ENCODE measurements at regions of chr1 and their contacts with region 1.

Region 1: DNA sequence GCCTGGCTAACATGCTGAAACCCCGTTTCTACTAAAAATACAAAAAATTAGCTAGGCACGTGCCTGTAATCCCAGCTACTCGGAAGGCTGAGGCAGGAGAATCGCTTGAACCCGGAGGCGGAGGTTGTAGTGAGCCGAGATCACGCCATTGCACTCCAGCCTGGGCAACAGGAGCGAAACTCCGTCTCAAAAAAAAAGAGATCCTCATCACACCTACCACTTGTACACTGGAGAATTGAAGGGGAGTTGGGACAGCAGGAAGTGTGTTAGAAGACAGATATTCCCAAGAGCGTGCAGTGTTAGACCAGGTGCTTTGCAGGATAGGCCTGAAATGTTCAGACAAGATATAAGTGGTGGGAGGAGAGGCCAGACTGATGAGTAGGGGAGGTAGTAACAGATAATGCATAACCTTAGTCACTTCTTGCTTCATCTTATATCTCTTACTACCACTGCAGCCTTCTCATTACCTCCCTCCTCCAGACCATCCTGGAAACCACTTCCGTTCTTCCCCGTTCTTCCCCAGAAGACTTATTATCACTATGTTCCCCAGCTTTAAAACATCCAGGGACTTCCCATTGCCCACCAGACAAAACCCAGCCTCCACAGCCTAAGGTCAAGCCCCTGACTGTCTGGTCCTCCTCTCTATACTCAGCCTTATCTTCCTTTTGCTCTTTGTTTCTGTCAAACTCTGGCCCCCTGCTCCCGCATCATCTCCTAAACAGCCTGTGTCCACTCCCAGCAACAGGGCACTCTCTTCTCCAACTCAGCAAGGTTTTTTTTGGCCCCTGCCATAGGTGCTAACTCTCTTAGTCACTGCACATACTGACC is 21.3 kb downstream of the FAM20B start:
- DNase-seq: peak; percentile 86 to 98 (median 92)
- ATAC-seq: peak; percentile 89
- H3K4me3 ChIP-seq: no peak overlapping the region
- H3K27ac ChIP-seq: peak overlapping the region; percentile 87
- H3K4me1 ChIP-seq: peaks cover 33 to 45% of the 10 kb centered on the region in 2 experiments
- H3K27me3 ChIP-seq: no peaks in the 10 kb centered on the region
- CTCF ChIP-seq: no peak
- EP300 ChIP-seq: peak; percentile 100
- POLR2A ChIP-seq: peak; percentile 58; the same call in 1 of the 2 replicates
- RAD21 ChIP-seq: peak in 1 of 2 experiments; percentile 34; a peak in 2 of 4 replicates

Region 2: DNA sequence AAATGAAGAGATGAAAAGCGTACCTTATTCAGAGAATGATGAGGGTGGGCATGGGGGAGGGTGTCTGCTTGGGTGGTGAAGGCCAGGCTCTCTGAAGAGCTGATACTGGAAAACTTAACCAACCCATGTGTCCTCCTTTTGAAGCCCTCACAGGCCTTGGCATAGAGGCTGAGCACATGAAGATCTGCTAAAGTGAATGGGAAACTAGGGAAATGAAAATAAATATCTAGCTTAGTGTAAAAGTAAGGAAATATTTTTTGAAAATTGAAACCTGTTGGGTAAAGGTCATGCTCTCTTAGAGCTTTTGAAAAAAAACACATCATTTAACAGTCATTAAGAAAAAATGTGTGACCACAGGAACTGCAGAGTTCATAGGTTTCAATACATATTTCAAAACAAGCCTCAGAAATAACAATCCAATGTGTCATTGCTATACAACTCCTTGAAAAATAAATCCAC is 362.5 kb before region 1 on chr1:
- CTCF ChIA-PET with region 1: no interaction called
- POLR2A ChIA-PET with region 1: no interaction called
- in situ Hi-C with region 1: no loop called
- intact Hi-C with region 1: no loop called
- DNase-seq: no peak
- ATAC-seq: no peak
- H3K4me3 ChIP-seq: no peak overlapping the region
- H3K27ac ChIP-seq: no peak overlapping the region
- H3K4me1 ChIP-seq: no peaks in the 10 kb centered on the region
- H3K27me3 ChIP-seq: no peaks in the 10 kb centered on the region; a peak in 1 of 5 replicates
- CTCF ChIP-seq: no peak
- EP300 ChIP-seq: no peak
- POLR2A ChIP-seq: no peak
- RAD21 ChIP-seq: no peak

Region 3: GRCh38 chr1:178938959-178939317 is 108.1 kb before region 1 on chr1:
- CTCF ChIA-PET with region 1: no interaction called
- POLR2A ChIA-PET with region 1: no interaction called
- in situ Hi-C with region 1: no loop called
- intact Hi-C with region 1: no loop called
- DNase-seq: no peak
- ATAC-seq: no peak
- H3K4me3 ChIP-seq: no peak overlapping the region
- H3K27ac ChIP-seq: no peak overlapping the region
- H3K4me1 ChIP-seq: no peaks in the 10 kb centered on the region
- H3K27me3 ChIP-seq: peaks cover 50 to 55% of the 10 kb centered on the region in 2 experiments
- CTCF ChIP-seq: no peak
- EP300 ChIP-seq: no peak
- POLR2A ChIP-seq: no peak
- RAD21 ChIP-seq: no peak

Region 4: GRCh38 chr1:179016747-179017549 is 30.1 kb before region 1 on chr1:
- CTCF ChIA-PET with region 1: no interaction called
- POLR2A ChIA-PET with region 1: interaction called, 3 read pairs
- in situ Hi-C with region 1: no loop called
- intact Hi-C with region 1: loop called (anchors 1 kb)
- DNase-seq: peak; percentile 87 to 99 (median 91)
- ATAC-seq: peak; percentile 91
- H3K4me3 ChIP-seq: peak overlapping the region; percentile 21
- H3K27ac ChIP-seq: peak overlapping the region; percentile 67
- H3K4me1 ChIP-seq: peaks cover 39 to 43% of the 10 kb centered on the region in 2 experiments
- H3K27me3 ChIP-seq: no peaks in the 10 kb centered on the region
- CTCF ChIP-seq: no peak; a peak in 1 of 6 replicates
- EP300 ChIP-seq: peak; percentile 91
- POLR2A ChIP-seq: peak; percentile 71
- RAD21 ChIP-seq: peak in 1 of 2 experiments; percentile 10; a peak in 1 of 4 replicates

Region 5: DNA sequence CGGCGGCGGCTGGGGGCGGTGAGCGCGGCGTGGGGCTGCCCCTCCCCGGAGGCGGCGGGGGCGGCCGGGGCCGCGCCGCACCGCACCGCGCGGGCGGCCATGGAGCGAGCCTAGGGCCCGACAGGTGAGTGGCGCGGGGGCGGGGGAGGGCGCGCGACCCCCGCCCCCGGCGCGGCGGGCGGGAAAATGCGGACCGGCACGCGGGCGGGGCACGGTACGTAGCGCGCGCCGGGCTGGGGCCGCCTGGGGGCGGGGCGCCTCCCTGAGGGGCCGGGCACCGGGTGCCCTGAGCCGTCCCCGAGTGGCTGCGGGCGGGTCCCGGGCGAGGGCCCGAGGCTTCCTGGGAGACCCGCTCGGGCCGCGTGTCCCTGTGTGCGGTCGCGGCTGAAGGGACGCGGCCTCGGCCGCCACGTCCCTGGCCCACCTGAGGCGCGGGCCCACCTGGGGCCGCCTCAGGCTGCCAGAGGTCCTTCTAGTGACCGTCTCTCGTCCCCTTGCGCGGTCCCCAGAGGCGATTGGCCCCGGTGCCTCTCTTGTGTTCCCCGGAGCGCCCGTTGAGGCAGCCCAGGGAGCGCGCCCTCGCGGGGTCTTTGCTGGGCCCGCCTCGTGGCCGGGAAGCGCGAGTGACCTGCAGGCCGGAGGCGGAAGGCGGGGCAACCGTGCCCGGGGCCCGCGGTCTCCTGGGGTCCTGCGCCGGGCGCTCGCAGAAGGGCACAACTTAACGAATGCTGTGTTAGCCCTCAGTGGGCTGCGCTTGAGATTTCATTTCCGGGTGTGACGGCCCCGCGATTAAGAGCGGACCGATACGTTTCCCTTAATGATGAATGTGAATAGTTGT is 20.8 kb before region 1 on chr1:
- CTCF ChIA-PET with region 1: no interaction called
- POLR2A ChIA-PET with region 1: interaction called, 15 read pairs
- in situ Hi-C with region 1: no loop called
- intact Hi-C with region 1: loop called (anchors 1 kb)
- DNase-seq: peak; percentile 85 to 96 (median 94)
- ATAC-seq: peak; percentile 81
- H3K4me3 ChIP-seq: peak overlapping the region; percentile 72
- H3K27ac ChIP-seq: peak overlapping the region; percentile 95
- H3K4me1 ChIP-seq: peaks cover 28 to 61% of the 10 kb centered on the region in 2 experiments
- H3K27me3 ChIP-seq: no peaks in the 10 kb centered on the region
- CTCF ChIP-seq: no peak
- EP300 ChIP-seq: no peak
- POLR2A ChIP-seq: peak; percentile 75
- RAD21 ChIP-seq: no peak; a peak in 1 of 4 replicates

Region 6: DNA sequence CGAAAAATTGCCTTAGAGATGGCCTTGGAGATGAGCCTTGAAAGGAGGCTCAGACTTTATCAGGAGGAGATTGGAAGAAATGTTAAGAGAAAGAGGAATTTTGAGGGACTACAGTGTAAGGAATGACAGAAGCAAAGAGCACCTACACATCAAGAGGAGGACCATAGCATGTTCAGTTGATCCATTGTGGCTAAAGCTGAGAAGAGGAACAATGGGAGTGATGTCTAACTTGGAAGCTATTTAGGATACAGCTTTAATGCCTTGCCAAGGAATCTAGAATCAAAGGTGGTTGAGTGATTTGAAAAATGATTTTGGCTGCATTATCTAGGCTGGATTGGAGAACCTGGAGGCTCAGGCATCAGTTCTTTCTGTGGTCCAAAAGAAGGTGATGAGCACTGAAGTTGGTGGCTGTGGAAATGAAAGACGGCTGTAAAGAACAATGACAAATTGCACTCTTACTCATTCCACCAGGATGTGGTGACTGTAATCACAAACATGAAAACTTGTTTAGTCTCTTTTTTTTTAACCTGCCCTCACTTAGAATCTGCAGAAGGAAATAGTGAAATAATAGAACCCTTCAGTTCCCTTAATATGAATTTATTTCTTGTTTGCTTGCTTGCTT is 10.1 kb before region 1 on chr1:
- CTCF ChIA-PET with region 1: no interaction called
- POLR2A ChIA-PET with region 1: interaction called, 6 read pairs
- in situ Hi-C with region 1: no loop called
- intact Hi-C with region 1: loop called (anchors 1 kb)
- DNase-seq: no peak
- ATAC-seq: no peak
- H3K4me3 ChIP-seq: no peak overlapping the region
- H3K27ac ChIP-seq: no peak overlapping the region
- H3K4me1 ChIP-seq: peaks cover 30 to 63% of the 10 kb centered on the region in 2 experiments
- H3K27me3 ChIP-seq: no peaks in the 10 kb centered on the region
- CTCF ChIP-seq: no peak; a peak in 1 of 6 replicates
- EP300 ChIP-seq: no peak
- POLR2A ChIP-seq: no peak
- RAD21 ChIP-seq: no peak

Region 7: GRCh38 chr1:179058487-179059483 is 11.8 kb after region 1 on chr1:
- CTCF ChIA-PET with region 1: no interaction called
- POLR2A ChIA-PET with region 1: interaction called, 3 read pairs
- in situ Hi-C with region 1: no loop called
- intact Hi-C with region 1: loop called (anchors 1 kb)
- DNase-seq: no peak
- ATAC-seq: peak; percentile 59
- H3K4me3 ChIP-seq: no peak overlapping the region
- H3K27ac ChIP-seq: peak overlapping the region; percentile 18
- H3K4me1 ChIP-seq: peaks cover 13 to 43% of the 10 kb centered on the region in 2 experiments
- H3K27me3 ChIP-seq: no peaks in the 10 kb centered on the region
- CTCF ChIP-seq: no peak
- EP300 ChIP-seq: peak; percentile 14; the same call in 1 of the 2 replicates
- POLR2A ChIP-seq: no peak
- RAD21 ChIP-seq: no peak

Measured in K562 (cell line).